ENCODE measurements at regions of chr17 and their contacts with region 1.

Region 1: GRCh38 chr17:34961093-34961911 is at the starts of genes CCT6B and ZNF830:
- DNase-seq: peak; percentile 87 to 94
- ATAC-seq: peak; percentile 97 to 100 (median 99)
- H3K4me3 ChIP-seq: peak within 1 kb of the TSS; percentile 59 to 100 (median 80)
- H3K27ac ChIP-seq: peak within 1 kb of the TSS; percentile 70 to 99 (median 95)
- H3K4me1 ChIP-seq: peaks cover 0 to 31% (median 23%) of the 10 kb centered on the region in 9 donors
- H3K27me3 ChIP-seq: no peaks in the 10 kb centered on the region
- CTCF ChIP-seq: peak in 1 of 9 donors; percentile 23
- total RNA-seq, gene CCT6B: 1.4 to 2.8 (median 1.9) TPM
- total RNA-seq, gene ZNF830: 8.1 to 11.2 (median 9.0) TPM

Region 2: DNA sequence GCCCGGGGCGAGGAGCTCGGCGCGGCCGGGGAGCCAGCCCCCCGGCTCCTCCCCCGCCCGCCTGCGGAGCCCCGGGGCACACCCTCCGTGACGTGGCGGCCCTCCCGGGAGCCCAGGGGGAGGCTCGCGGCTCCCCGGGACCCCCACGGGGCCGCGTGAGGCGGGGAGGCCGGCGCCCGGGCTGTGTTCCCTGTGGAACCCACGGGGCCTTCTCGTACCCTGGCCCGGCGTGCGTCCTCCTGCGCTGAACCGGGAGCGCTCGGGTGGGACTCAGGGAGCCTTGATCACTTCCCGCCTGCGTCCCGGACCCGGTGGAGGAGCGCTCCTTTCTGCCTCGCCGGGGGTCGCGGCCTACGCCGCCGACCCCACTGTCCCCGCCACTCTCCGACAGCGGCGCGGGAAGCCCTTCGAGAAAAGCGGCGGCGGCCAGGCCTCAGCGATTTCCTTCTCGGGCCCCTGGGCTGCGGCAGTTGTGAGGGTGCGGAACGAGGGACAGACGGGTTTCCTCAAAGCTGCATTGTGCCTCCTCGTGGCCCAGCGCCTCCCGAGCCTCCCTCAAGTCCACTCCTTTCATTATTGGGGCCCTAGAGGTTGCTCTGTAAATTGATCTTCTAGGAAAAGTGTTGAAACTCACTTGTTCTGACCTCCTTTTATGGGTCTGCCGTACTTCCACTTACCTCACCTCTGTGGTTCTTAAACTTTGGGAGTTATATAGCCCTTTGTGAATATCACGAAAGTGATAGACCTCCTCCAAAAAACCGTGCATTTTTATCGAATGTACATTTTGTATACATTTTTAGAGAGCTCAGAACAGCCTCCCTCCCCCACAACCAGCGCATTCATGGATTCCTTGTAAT is 19.6 kb after region 1 on chr17:
- intact Hi-C with region 1: loop called in 1 of 10 experiments (anchors 2 kb)
- DNase-seq: peak; percentile 68 to 78
- ATAC-seq: peak; percentile 88 to 96 (median 94)
- H3K4me3 ChIP-seq: peak overlapping the region; percentile 94 to 99 (median 96)
- H3K27ac ChIP-seq: peak overlapping the region; percentile 98 to 100 (median 99)
- H3K4me1 ChIP-seq: peaks cover 0 to 33% (median 25%) of the 10 kb centered on the region in 9 donors
- H3K27me3 ChIP-seq: no peaks in the 10 kb centered on the region
- CTCF ChIP-seq: peak in 7 of 9 donors; percentile 12 to 64 (median 50)

Measured in heart right ventricle (tissue), 16 donors.